Activated CD4-positive, alpha-beta T cell treated with anti-CD3 and anti-CD28 coated beads, Interleukin-2, amount 10 ng/mL, durations not matched to agents 24 days and 14 days (primary cell): ENCODE measurements at regions of chr14 and their contacts with region 1.

Region 1: GRCh38 chr14:76977793-76978720 is 50.5 kb downstream of the IRF2BPL start:
- DNase-seq: peak; percentile 95
- H3K4me3 Mint-ChIP-seq: peak overlapping the region; percentile 69
- H3K27ac Mint-ChIP-seq: peak overlapping the region; percentile 92
- H3K4me1 Mint-ChIP-seq: peaks cover 28% of the 10 kb centered on the region
- H3K27me3 Mint-ChIP-seq: peaks cover 2% of the 10 kb centered on the region

Region 2: GRCh38 chr14:76855066-76855465 is 123.0 kb before region 1 on chr14:
- intact Hi-C with region 1: no loop called
- DNase-seq: no peak
- H3K4me3 Mint-ChIP-seq: no peak overlapping the region
- H3K27ac Mint-ChIP-seq: no peak overlapping the region
- H3K4me1 Mint-ChIP-seq: no peaks in the 10 kb centered on the region
- H3K27me3 Mint-ChIP-seq: peaks cover 20% of the 10 kb centered on the region

Region 3: GRCh38 chr14:76962303-76962660 is 15.8 kb before region 1 on chr14:
- intact Hi-C with region 1: loop called (anchors 1 kb)
- DNase-seq: no peak
- H3K4me3 Mint-ChIP-seq: peak overlapping the region; percentile 78
- H3K27ac Mint-ChIP-seq: peak overlapping the region; percentile 97
- H3K4me1 Mint-ChIP-seq: peaks cover 81% of the 10 kb centered on the region
- H3K27me3 Mint-ChIP-seq: peaks cover 4% of the 10 kb centered on the region

Region 4: GRCh38 chr14:76995279-76996005 is 17.4 kb after region 1 on chr14:
- intact Hi-C with region 1: loop called (anchors 2 kb)
- DNase-seq: no peak
- H3K4me3 Mint-ChIP-seq: no peak overlapping the region
- H3K27ac Mint-ChIP-seq: no peak overlapping the region
- H3K4me1 Mint-ChIP-seq: peaks cover 16% of the 10 kb centered on the region
- H3K27me3 Mint-ChIP-seq: no peaks in the 10 kb centered on the region

Region 5: GRCh38 chr14:77023001-77023996 is 45.2 kb after region 1 on chr14:
- intact Hi-C with region 1: loop called (anchors 1 kb)
- DNase-seq: peak; percentile 74
- H3K4me3 Mint-ChIP-seq: peak overlapping the region; percentile 74
- H3K27ac Mint-ChIP-seq: peak overlapping the region; percentile 81
- H3K4me1 Mint-ChIP-seq: peaks cover 35% of the 10 kb centered on the region
- H3K27me3 Mint-ChIP-seq: no peaks in the 10 kb centered on the region